K562 (cell line): ENCODE measurements at regions of chrX and their contacts with region 1.

Region 1: GRCh38 chrX:49915361-49916222 is 6.8 kb upstream of the CLCN5 start:
- DNase-seq: peak; percentile 38 to 64 (median 48)
- ATAC-seq: peak; percentile 91
- H3K4me3 ChIP-seq: no peak overlapping the region
- H3K27ac ChIP-seq: no peak overlapping the region
- H3K4me1 ChIP-seq: no peaks in the 10 kb centered on the region; a peak in 1 of 5 replicates
- H3K27me3 ChIP-seq: peaks cover 0 to 7% of the 10 kb centered on the region in 2 experiments; a peak in 1 of 5 replicates
- CTCF ChIP-seq: peak; percentile 68 to 84 (median 69)
- EP300 ChIP-seq: no peak
- POLR2A ChIP-seq: no peak
- RAD21 ChIP-seq: peak; percentile 46 to 75; a peak in 3 of 4 replicates

Region 2: GRCh38 chrX:49754233-49754857 is 161.2 kb before region 1 on chrX:
- CTCF ChIA-PET with region 1: no interaction called
- POLR2A ChIA-PET with region 1: no interaction called
- in situ Hi-C with region 1: no loop called
- intact Hi-C with region 1: no loop called
- DNase-seq: peak; percentile 39 to 59 (median 52)
- ATAC-seq: peak; percentile 93
- H3K4me3 ChIP-seq: no peak overlapping the region
- H3K27ac ChIP-seq: no peak overlapping the region
- H3K4me1 ChIP-seq: no peaks in the 10 kb centered on the region
- H3K27me3 ChIP-seq: peaks cover 0 to 8% of the 10 kb centered on the region in 2 experiments; a peak in 1 of 5 replicates
- CTCF ChIP-seq: peak; percentile 75 to 94 (median 84)
- EP300 ChIP-seq: no peak
- POLR2A ChIP-seq: no peak
- RAD21 ChIP-seq: peak; percentile 61 to 79; a peak in 3 of 4 replicates

Region 3: GRCh38 chrX:49840679-49841078 is 74.9 kb before region 1 on chrX:
- CTCF ChIA-PET with region 1: no interaction called
- POLR2A ChIA-PET with region 1: interaction called, 4 read pairs
- in situ Hi-C with region 1: no loop called
- intact Hi-C with region 1: loop called (anchors 2 kb)
- DNase-seq: peak; percentile 68 to 81 (median 71)
- ATAC-seq: peak; percentile 91
- H3K4me3 ChIP-seq: no peak overlapping the region
- H3K27ac ChIP-seq: no peak overlapping the region
- H3K4me1 ChIP-seq: peaks cover 0 to 10% of the 10 kb centered on the region in 2 experiments; a peak in 2 of 5 replicates
- H3K27me3 ChIP-seq: no peaks in the 10 kb centered on the region
- CTCF ChIP-seq: peak; percentile 80 to 82 (median 82)
- EP300 ChIP-seq: no peak
- POLR2A ChIP-seq: no peak
- RAD21 ChIP-seq: peak; percentile 74 to 80

Region 4: GRCh38 chrX:49995021-49995731 is 79.6 kb after region 1 on chrX:
- CTCF ChIA-PET with region 1: no interaction called
- POLR2A ChIA-PET with region 1: no interaction called
- in situ Hi-C with region 1: no loop called
- intact Hi-C with region 1: no loop called
- DNase-seq: peak in 1 of 4 experiments; percentile 4
- ATAC-seq: no peak
- H3K4me3 ChIP-seq: no peak overlapping the region
- H3K27ac ChIP-seq: no peak overlapping the region
- H3K4me1 ChIP-seq: no peaks in the 10 kb centered on the region
- H3K27me3 ChIP-seq: no peaks in the 10 kb centered on the region
- CTCF ChIP-seq: no peak
- EP300 ChIP-seq: no peak
- POLR2A ChIP-seq: no peak
- RAD21 ChIP-seq: no peak

Region 5: GRCh38 chrX:50054145-50054544 is 138.6 kb after region 1 on chrX:
- CTCF ChIA-PET with region 1: no interaction called
- POLR2A ChIA-PET with region 1: no interaction called
- in situ Hi-C with region 1: no loop called
- intact Hi-C with region 1: no loop called
- DNase-seq: no peak
- ATAC-seq: no peak
- H3K4me3 ChIP-seq: no peak overlapping the region
- H3K27ac ChIP-seq: no peak overlapping the region
- H3K4me1 ChIP-seq: no peaks in the 10 kb centered on the region
- H3K27me3 ChIP-seq: no peaks in the 10 kb centered on the region
- CTCF ChIP-seq: no peak
- EP300 ChIP-seq: no peak
- POLR2A ChIP-seq: no peak
- RAD21 ChIP-seq: no peak

Region 6: GRCh38 chrX:50081282-50081889 is 165.8 kb after region 1 on chrX:
- CTCF ChIA-PET with region 1: interaction called, 6 read pairs
- POLR2A ChIA-PET with region 1: no interaction called
- in situ Hi-C with region 1: no loop called
- intact Hi-C with region 1: loop called (anchors 2 kb)
- DNase-seq: no peak
- ATAC-seq: no peak
- H3K4me3 ChIP-seq: no peak overlapping the region
- H3K27ac ChIP-seq: no peak overlapping the region
- H3K4me1 ChIP-seq: no peaks in the 10 kb centered on the region
- H3K27me3 ChIP-seq: no peaks in the 10 kb centered on the region
- CTCF ChIP-seq: peak; percentile 25 to 42 (median 40); a peak in 5 of 6 replicates
- EP300 ChIP-seq: no peak
- POLR2A ChIP-seq: no peak
- RAD21 ChIP-seq: peak; percentile 46 to 48; a peak in 3 of 4 replicates

Region 7: DNA sequence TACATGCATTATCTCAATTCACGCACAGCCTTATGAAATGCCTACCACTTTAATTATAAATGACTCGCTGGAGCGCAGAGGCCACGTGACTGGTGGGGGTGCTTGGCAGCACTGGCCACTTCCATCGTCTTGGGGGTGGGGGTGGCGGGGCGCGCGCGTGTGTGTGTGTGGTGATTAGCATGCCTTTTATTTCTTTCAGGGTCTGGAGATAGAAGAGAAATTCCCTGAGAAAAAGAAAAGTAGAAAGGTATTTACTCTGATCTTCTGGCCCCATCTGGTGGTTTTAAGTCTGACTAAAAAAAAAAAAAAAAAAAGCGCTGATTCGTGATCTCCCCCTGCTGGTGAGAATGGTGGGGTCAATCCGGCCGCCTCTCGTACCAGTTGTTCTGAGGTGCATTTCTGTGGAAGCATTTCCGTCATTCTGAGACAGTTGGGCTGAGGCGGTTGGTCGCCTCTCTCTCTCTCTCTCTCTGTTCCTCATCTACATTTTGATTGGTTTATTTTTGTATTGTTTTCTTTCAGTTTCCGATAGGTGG is 288.8 kb after region 1 on chrX and contains the start of gene CCNB3:
- CTCF ChIA-PET with region 1: interaction called, 7 read pairs
- POLR2A ChIA-PET with region 1: no interaction called
- in situ Hi-C with region 1: loop called (anchors 10 kb)
- intact Hi-C with region 1: loop called (anchors 1 kb)
- DNase-seq: peak; percentile 53 to 71 (median 62)
- ATAC-seq: peak; percentile 93
- H3K4me3 ChIP-seq: no peak within 1 kb of the TSS
- H3K27ac ChIP-seq: no peak within 1 kb of the TSS; the same call in 2 of the 3 replicates
- H3K4me1 ChIP-seq: peaks cover 0 to 5% of the 10 kb centered on the region in 2 experiments; a peak in 2 of 5 replicates
- H3K27me3 ChIP-seq: no peaks in the 10 kb centered on the region
- CTCF ChIP-seq: peak; percentile 83 to 99 (median 98)
- EP300 ChIP-seq: no peak
- POLR2A ChIP-seq: no peak
- RAD21 ChIP-seq: peak; percentile 55 to 69
- polyA plus RNA-seq, gene CCNB3: 0.06 TPM in 1 of 2 experiments, not detected in the other